ENCODE measurements at regions of chr22 and their contacts with region 1.

Region 1: GRCh38 chr22:17266251-17266971 is 47.2 kb upstream of the ADA2 start:
- DNase-seq: no peak
- ATAC-seq: peak; percentile 67
- H3K4me3 ChIP-seq: no peak overlapping the region
- H3K27ac ChIP-seq: no peak overlapping the region
- H3K4me1 ChIP-seq: peaks cover 3% of the 10 kb centered on the region; the same call in 1 of the 2 replicates
- H3K27me3 ChIP-seq: no peaks in the 10 kb centered on the region
- CTCF ChIP-seq: no peak
- EP300 ChIP-seq: no peak
- POLR2A ChIP-seq: no peak
- RAD21 ChIP-seq: no peak

Region 2: GRCh38 chr22:17201285-17201945 is 65.0 kb before region 1 on chr22:
- CTCF ChIA-PET with region 1: interaction called, 11 read pairs
- POLR2A ChIA-PET with region 1: no interaction called
- RAD21 ChIA-PET with region 1: interaction called, 9 read pairs
- SMC1A ChIA-PET with region 1: interaction called, 3 read pairs
- in situ Hi-C with region 1: no loop called
- intact Hi-C with region 1: no loop called
- DNase-seq: no peak
- ATAC-seq: no peak
- H3K4me3 ChIP-seq: no peak overlapping the region
- H3K27ac ChIP-seq: no peak overlapping the region
- H3K4me1 ChIP-seq: no peaks in the 10 kb centered on the region
- H3K27me3 ChIP-seq: no peaks in the 10 kb centered on the region
- CTCF ChIP-seq: no peak
- EP300 ChIP-seq: no peak
- POLR2A ChIP-seq: no peak
- RAD21 ChIP-seq: no peak

Region 3: GRCh38 chr22:17243524-17243923 is 22.9 kb before region 1 on chr22:
- CTCF ChIA-PET with region 1: interaction called, 10 read pairs
- POLR2A ChIA-PET with region 1: interaction called, 4 read pairs
- RAD21 ChIA-PET with region 1: interaction called, 6 read pairs
- SMC1A ChIA-PET with region 1: no interaction called
- in situ Hi-C with region 1: no loop called
- intact Hi-C with region 1: no loop called
- DNase-seq: peak; percentile 84
- ATAC-seq: peak; percentile 97
- H3K4me3 ChIP-seq: no peak overlapping the region
- H3K27ac ChIP-seq: peak overlapping the region; percentile 97
- H3K4me1 ChIP-seq: peaks cover 24% of the 10 kb centered on the region
- H3K27me3 ChIP-seq: no peaks in the 10 kb centered on the region
- CTCF ChIP-seq: no peak
- EP300 ChIP-seq: peak in 1 of 2 experiments; percentile 66; a peak in 2 of 4 replicates
- POLR2A ChIP-seq: 0 out of 2 replicates have a peak, but pooled peaks have one; percentile 34
- RAD21 ChIP-seq: no peak

Region 4: DNA sequence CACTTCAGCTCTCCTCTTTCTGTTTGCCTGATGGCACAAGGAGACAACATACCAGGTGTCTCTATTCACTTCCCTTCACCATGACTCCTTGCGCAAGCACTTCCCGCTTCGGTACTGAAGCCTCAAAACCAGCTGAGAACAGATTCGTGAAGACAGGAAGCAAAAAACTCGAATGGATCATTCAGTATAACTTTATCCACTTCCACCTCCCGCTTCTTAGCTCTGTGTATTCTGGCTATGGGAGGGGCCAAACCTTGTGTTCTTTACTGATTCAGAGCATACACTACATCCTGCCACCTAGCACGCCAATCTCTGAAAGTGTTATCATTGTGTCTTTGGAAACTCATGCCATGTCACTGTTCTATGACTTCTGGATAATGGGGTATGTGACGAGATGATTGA is 15.0 kb after region 1 on chr22:
- CTCF ChIA-PET with region 1: interaction called, 9 read pairs
- POLR2A ChIA-PET with region 1: interaction called, 3 read pairs
- RAD21 ChIA-PET with region 1: interaction called, 6 read pairs
- SMC1A ChIA-PET with region 1: interaction called, 13 read pairs
- in situ Hi-C with region 1: no loop called
- intact Hi-C with region 1: no loop called
- DNase-seq: no peak
- ATAC-seq: no peak
- H3K4me3 ChIP-seq: no peak overlapping the region
- H3K27ac ChIP-seq: no peak overlapping the region; the same call in 1 of the 2 replicates
- H3K4me1 ChIP-seq: peaks cover 16% of the 10 kb centered on the region
- H3K27me3 ChIP-seq: no peaks in the 10 kb centered on the region
- CTCF ChIP-seq: no peak
- EP300 ChIP-seq: no peak
- POLR2A ChIP-seq: no peak
- RAD21 ChIP-seq: no peak

Region 5: GRCh38 chr22:17303840-17304779 is 37.7 kb after region 1 on chr22:
- CTCF ChIA-PET with region 1: interaction called, 3 read pairs
- POLR2A ChIA-PET with region 1: no interaction called
- RAD21 ChIA-PET with region 1: interaction called, 9 read pairs
- SMC1A ChIA-PET with region 1: interaction called, 3 read pairs
- in situ Hi-C with region 1: no loop called
- intact Hi-C with region 1: loop called (anchors 5 kb)
- DNase-seq: peak; percentile 77
- ATAC-seq: peak; percentile 96
- H3K4me3 ChIP-seq: no peak overlapping the region
- H3K27ac ChIP-seq: peak overlapping the region; percentile 84
- H3K4me1 ChIP-seq: peaks cover 21% of the 10 kb centered on the region
- H3K27me3 ChIP-seq: no peaks in the 10 kb centered on the region
- CTCF ChIP-seq: no peak
- EP300 ChIP-seq: peak; percentile 33 to 84; a peak in 3 of 4 replicates
- POLR2A ChIP-seq: peak; percentile 47
- RAD21 ChIP-seq: no peak

Region 6: DNA sequence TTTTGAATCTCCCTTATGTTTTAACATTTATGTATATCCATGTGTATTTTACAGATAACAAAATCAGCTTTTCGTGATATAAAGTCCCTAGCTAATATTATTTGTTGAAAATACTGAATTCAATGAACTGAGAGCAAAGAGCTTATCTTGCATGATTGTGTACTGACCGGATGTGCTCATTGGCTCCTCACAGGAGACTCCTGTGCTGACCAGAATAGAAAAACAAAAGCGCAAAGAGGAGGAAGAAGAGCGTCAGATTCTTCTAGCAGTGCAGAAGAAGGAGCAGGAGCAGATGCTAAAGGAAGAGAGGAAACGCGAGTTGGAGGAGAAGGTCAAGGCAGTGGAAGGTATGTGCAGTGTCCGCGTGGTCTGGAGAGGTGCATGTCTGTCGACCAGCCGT is 257.5 kb after region 1 on chr22:
- CTCF ChIA-PET with region 1: no interaction called
- POLR2A ChIA-PET with region 1: interaction called, 10 read pairs
- RAD21 ChIA-PET with region 1: no interaction called
- SMC1A ChIA-PET with region 1: no interaction called
- in situ Hi-C with region 1: no loop called
- intact Hi-C with region 1: no loop called
- DNase-seq: no peak
- ATAC-seq: no peak
- H3K4me3 ChIP-seq: no peak overlapping the region
- H3K27ac ChIP-seq: no peak overlapping the region
- H3K4me1 ChIP-seq: no peaks in the 10 kb centered on the region
- H3K27me3 ChIP-seq: no peaks in the 10 kb centered on the region; a peak in 2 of 4 replicates
- CTCF ChIP-seq: no peak
- EP300 ChIP-seq: no peak
- POLR2A ChIP-seq: no peak
- RAD21 ChIP-seq: no peak